CD8-positive, alpha-beta T cell (primary cell): ENCODE measurements at regions of chr6 and their contacts with region 1.

Region 1: DNA sequence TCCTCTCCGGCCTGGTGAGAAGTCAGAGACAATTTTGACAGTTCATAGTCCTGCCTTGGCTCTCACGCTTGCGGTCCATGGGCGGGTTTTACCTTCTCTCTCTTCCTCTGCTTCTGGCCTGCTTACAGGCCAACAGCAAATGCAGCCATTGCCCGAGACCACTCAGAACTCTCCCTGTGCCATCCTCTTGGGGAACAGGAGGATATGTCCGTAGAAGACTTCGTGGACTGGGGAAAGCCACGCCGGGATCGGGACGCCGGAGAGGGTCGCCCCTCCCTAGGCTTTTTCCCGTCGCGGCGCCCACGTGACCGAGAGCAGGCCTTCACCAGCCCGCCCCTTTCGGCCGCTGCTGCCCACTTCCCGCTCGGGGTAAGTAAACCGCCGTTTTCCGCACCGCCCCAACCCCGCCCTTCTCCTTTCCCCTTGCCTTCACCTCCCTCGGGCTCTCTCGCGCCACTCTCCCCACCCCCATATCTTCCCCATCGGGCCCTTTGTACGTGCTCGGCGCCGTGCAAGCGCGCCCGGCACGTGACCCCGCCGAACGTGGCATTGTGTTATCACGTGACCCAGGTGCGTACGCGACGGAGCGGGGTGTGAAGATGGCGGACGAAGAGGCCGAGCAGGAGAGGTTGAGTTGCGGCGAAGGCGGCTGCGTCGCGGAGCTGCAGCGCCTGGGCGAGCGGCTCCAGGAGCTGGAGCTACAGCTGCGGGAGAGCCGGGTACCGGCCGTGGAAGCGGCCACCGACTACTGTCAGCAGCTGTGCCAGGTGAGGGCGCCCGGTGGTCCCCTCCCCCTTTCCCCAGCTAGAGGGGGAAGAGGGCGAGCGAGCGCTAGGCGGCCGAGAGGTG is at the start of gene ZNF292:
- DNase-seq: peak; percentile 85 to 98 (median 95)
- ATAC-seq: peak; percentile 67
- H3K4me3 ChIP-seq: peak within 1 kb of the TSS; percentile 73 to 80
- H3K4me3 Mint-ChIP-seq: peak within 1 kb of the TSS; percentile 96
- H3K27ac ChIP-seq: peak within 1 kb of the TSS; percentile 85 to 95
- H3K27ac Mint-ChIP-seq: peak within 1 kb of the TSS; percentile 98
- H3K4me1 ChIP-seq: peaks cover 54% of the 10 kb centered on the region
- H3K4me1 Mint-ChIP-seq: peaks cover 58% of the 10 kb centered on the region
- H3K27me3 ChIP-seq: no peaks in the 10 kb centered on the region
- H3K27me3 Mint-ChIP-seq: no peaks in the 10 kb centered on the region
- CTCF ChIP-seq: no peak
- total RNA-seq, gene ZNF292: 82.6 to 87.6 TPM

Region 2: GRCh38 chr6:87197547-87197946 is 42.3 kb after region 1 on chr6:
- CTCF ChIA-PET with region 1: no interaction called
- POLR2A ChIA-PET with region 1: no interaction called
- intact Hi-C with region 1: loop called in 1 of 2 experiments (anchors 5 kb)
- DNase-seq: no peak
- ATAC-seq: no peak
- H3K4me3 ChIP-seq: no peak overlapping the region
- H3K4me3 Mint-ChIP-seq: no peak overlapping the region
- H3K27ac ChIP-seq: no peak overlapping the region
- H3K27ac Mint-ChIP-seq: no peak overlapping the region
- H3K4me1 ChIP-seq: peaks cover 12% of the 10 kb centered on the region
- H3K4me1 Mint-ChIP-seq: peaks cover 74% of the 10 kb centered on the region
- H3K27me3 ChIP-seq: no peaks in the 10 kb centered on the region
- H3K27me3 Mint-ChIP-seq: no peaks in the 10 kb centered on the region
- CTCF ChIP-seq: no peak

Region 3: GRCh38 chr6:87322304-87323212 is 167.3 kb after region 1 on chr6 and contains the start of gene SMIM8:
- CTCF ChIA-PET with region 1: interaction called, 3 read pairs
- POLR2A ChIA-PET with region 1: no interaction called
- intact Hi-C with region 1: loop called (anchors 1 kb)
- DNase-seq: peak; percentile 66 to 90 (median 86)
- ATAC-seq: peak; percentile 99
- H3K4me3 ChIP-seq: peak within 1 kb of the TSS; percentile 72 to 86
- H3K4me3 Mint-ChIP-seq: peak within 1 kb of the TSS; percentile 94
- H3K27ac ChIP-seq: peak within 1 kb of the TSS; percentile 52 to 58
- H3K27ac Mint-ChIP-seq: peak within 1 kb of the TSS; percentile 90
- H3K4me1 ChIP-seq: peaks cover 6% of the 10 kb centered on the region
- H3K4me1 Mint-ChIP-seq: peaks cover 25% of the 10 kb centered on the region
- H3K27me3 ChIP-seq: no peaks in the 10 kb centered on the region
- H3K27me3 Mint-ChIP-seq: no peaks in the 10 kb centered on the region
- CTCF ChIP-seq: peak; percentile 99
- total RNA-seq, gene SMIM8: 4.2 TPM